ENCODE measurements at regions of chr13 and their contacts with region 1.

Region 1: GRCh38 chr13:48400850-48401291 is 12.0 kb downstream of the LPAR6 start:
- DNase-seq: peak in 1 of 2 donors; percentile 51
- ATAC-seq: peak; percentile 20 to 48 (median 29)
- H3K4me3 ChIP-seq: no peak overlapping the region
- H3K4me3 Mint-ChIP-seq: peak overlapping the region; percentile 63
- H3K27ac ChIP-seq: peak overlapping the region; percentile 38
- H3K27ac Mint-ChIP-seq: peak overlapping the region; percentile 69 to 79
- H3K4me1 ChIP-seq: peaks cover 21% of the 10 kb centered on the region
- H3K4me1 Mint-ChIP-seq: peaks cover 44 to 50% of the 10 kb centered on the region in 2 donors
- H3K27me3 ChIP-seq: no peaks in the 10 kb centered on the region
- H3K27me3 Mint-ChIP-seq: no peaks in the 10 kb centered on the region
- CTCF ChIP-seq: no peak

Region 2: GRCh38 chr13:48155848-48156247 is 245.0 kb before region 1 on chr13:
- intact Hi-C with region 1: loop called (anchors 5 kb)
- DNase-seq: peak in 1 of 2 donors; percentile 86
- ATAC-seq: peak; percentile 88 to 94 (median 93)
- H3K4me3 ChIP-seq: no peak overlapping the region
- H3K4me3 Mint-ChIP-seq: peak overlapping the region; percentile 86
- H3K27ac ChIP-seq: peak overlapping the region; percentile 74
- H3K27ac Mint-ChIP-seq: peak overlapping the region; percentile 95 to 97
- H3K4me1 ChIP-seq: peaks cover 39% of the 10 kb centered on the region
- H3K4me1 Mint-ChIP-seq: peaks cover 55 to 62% of the 10 kb centered on the region in 2 donors
- H3K27me3 ChIP-seq: no peaks in the 10 kb centered on the region
- H3K27me3 Mint-ChIP-seq: no peaks in the 10 kb centered on the region
- CTCF ChIP-seq: no peak

Region 3: DNA sequence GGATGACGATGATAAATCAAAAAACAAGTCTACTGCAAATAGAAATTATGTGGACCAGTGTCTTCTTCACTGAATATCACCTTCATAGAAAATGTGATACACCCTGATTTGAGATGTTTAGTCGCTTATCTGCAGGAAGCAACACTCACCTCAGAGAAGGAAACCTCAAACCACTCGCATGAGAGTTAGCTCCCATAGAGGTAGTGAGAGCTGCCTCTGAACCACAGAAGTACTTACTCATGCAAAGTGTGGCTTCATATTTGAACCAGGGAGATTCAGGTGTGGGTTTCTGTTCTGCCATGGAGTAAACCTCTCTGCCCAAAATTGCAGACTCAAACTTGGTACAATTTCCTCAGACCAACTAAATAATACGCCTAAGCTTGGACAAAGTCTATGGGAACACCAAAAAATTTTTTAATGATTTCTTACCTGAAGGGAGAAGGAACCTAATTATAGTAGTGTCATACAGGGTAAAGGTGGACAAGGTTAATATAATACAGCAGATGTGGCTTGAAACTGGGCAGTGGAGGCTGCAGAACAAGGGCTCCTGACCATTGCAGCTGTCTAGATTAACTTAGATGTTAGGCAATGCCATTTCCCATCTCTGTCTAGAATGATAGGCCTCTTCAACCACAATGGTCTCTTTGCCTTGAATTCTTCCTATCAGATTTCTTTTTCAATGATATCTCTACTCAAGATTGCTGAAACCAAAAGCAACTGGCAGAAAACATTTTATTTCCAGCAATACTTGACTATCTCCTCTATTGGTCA is 161.6 kb after region 1 on chr13:
- intact Hi-C with region 1: loop called (anchors 5 kb)
- DNase-seq: peak; percentile 33 to 92
- ATAC-seq: peak; percentile 85 to 99 (median 98)
- H3K4me3 ChIP-seq: no peak overlapping the region
- H3K4me3 Mint-ChIP-seq: peak overlapping the region; percentile 80
- H3K27ac ChIP-seq: peak overlapping the region; percentile 42
- H3K27ac Mint-ChIP-seq: peak overlapping the region; percentile 52 to 68
- H3K4me1 ChIP-seq: peaks cover 16% of the 10 kb centered on the region
- H3K4me1 Mint-ChIP-seq: peaks cover 54 to 61% of the 10 kb centered on the region in 2 donors
- H3K27me3 ChIP-seq: no peaks in the 10 kb centered on the region
- H3K27me3 Mint-ChIP-seq: peaks cover 6 to 25% of the 10 kb centered on the region in 2 donors
- CTCF ChIP-seq: no peak

Region 4: DNA sequence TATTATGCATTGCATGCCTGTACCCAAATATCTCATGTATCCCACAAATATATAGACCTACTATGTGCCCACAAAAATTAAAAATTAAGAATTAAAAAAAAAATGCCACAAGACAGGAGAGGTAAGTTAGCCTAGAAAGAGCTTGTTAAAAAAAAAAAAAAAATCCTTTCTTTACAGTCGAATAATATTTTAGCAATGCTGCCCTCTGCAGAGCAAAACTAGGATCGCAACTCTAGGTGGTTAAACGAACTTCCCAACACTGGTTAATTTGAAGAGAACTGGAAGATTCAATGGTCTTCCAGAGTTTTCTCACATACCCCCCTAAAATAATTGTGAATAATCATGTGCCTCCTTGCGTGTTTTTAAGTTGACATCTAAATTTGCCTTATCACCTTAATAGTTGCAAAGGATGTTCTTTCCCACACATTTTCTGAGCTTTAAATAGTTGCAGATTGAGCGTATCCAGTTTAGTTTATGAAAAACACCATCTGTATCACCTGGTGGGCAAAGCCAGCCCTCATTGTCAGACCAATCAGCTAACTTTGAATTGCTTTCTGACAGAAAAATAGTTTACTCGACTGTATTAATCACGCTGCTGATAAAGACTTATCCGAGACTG is 179.4 kb after region 1 on chr13:
- intact Hi-C with region 1: loop called (anchors 5 kb)
- DNase-seq: peak; percentile 56 to 86
- ATAC-seq: peak; percentile 72 to 79 (median 78)
- H3K4me3 ChIP-seq: no peak overlapping the region
- H3K4me3 Mint-ChIP-seq: no peak overlapping the region
- H3K27ac ChIP-seq: no peak overlapping the region
- H3K27ac Mint-ChIP-seq: no peak overlapping the region
- H3K4me1 ChIP-seq: peaks cover 21% of the 10 kb centered on the region
- H3K4me1 Mint-ChIP-seq: peaks cover 6 to 27% of the 10 kb centered on the region in 2 donors
- H3K27me3 ChIP-seq: no peaks in the 10 kb centered on the region
- H3K27me3 Mint-ChIP-seq: peaks cover 6 to 12% of the 10 kb centered on the region in 2 donors
- CTCF ChIP-seq: peak; percentile 89